ENCODE measurements at regions of chr5 and their contacts with region 1.

Region 1: DNA sequence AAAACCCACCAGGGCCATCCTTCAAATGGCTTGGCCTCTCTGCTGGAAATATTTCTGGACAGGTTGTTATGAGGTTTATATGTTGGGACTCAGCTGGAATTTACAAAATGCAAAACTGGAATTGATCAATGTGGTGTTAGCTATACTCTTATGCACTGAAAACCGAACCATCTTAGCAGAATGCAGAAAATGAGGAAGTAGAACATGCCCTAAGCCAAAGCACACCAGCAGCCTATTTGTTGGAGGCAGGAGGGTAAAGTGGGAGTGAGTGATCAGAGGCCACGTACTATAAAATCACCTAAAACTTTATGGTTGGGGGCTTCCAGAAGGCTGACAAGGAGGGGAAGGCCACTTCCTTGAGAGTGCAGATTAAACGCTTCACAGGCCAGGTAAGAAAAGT is 63.6 kb upstream of the C5orf63 start:
- DNase-seq: no peak
- H3K4me3 Mint-ChIP-seq: no peak overlapping the region
- H3K27ac Mint-ChIP-seq: no peak overlapping the region
- H3K4me1 Mint-ChIP-seq: no peaks in the 10 kb centered on the region
- H3K27me3 Mint-ChIP-seq: no peaks in the 10 kb centered on the region
- CTCF ChIP-seq: no peak

Region 2: GRCh38 chr5:127088251-127089010 is 48.5 kb before region 1 on chr5:
- CTCF ChIA-PET with region 1: no interaction called
- POLR2A ChIA-PET with region 1: no interaction called
- intact Hi-C with region 1: no loop called
- DNase-seq: peak; percentile 99
- H3K4me3 Mint-ChIP-seq: no peak overlapping the region
- H3K27ac Mint-ChIP-seq: peak overlapping the region; percentile 80
- H3K4me1 Mint-ChIP-seq: peaks cover 31% of the 10 kb centered on the region
- H3K27me3 Mint-ChIP-seq: no peaks in the 10 kb centered on the region
- CTCF ChIP-seq: no peak

Region 3: GRCh38 chr5:127275745-127276144 is 138.8 kb after region 1 on chr5:
- CTCF ChIA-PET with region 1: no interaction called
- POLR2A ChIA-PET with region 1: no interaction called
- intact Hi-C with region 1: loop called (anchors 10 kb)
- DNase-seq: no peak
- H3K4me3 Mint-ChIP-seq: no peak overlapping the region
- H3K27ac Mint-ChIP-seq: no peak overlapping the region
- H3K4me1 Mint-ChIP-seq: no peaks in the 10 kb centered on the region
- H3K27me3 Mint-ChIP-seq: no peaks in the 10 kb centered on the region
- CTCF ChIP-seq: no peak

Measured in MCF 10A (cell line).